MCF 10A (cell line): ENCODE measurements at regions of chr5 and their contacts with region 1.

Region 1: DNA sequence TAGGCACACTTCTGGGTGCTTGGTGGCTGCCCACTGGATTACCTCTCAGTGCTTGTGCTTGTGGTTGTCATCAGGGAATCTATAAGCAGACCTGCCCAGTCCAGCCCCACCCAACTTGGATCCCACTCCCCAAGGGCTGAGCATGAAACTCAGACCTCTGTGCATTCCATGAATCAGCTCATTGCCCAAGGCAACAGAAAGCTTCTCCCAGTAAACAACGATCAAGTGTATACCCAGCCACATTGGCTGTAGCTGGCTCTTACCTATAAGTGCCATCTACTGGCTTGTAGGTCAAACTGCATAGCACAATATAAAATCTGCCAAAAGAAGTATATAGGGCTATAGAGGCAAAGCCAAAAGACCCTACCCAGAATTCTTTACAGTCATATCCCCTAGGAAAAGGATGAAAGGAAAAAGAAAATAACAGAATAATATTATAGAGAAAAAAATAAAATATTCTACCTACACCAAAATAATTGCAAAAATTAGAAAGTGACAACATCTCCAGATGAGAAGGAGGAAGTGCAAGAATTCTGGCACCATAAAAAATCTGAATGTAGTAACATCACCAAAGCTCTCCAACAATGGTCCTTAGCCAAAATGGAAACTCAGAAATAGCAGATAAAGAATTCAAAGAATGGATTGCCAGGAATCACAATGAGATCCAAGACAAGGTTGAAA is 321.0 kb upstream of the TRPC7 start:
- DNase-seq: peak; percentile 55
- H3K4me3 Mint-ChIP-seq: no peak overlapping the region
- H3K27ac Mint-ChIP-seq: no peak overlapping the region
- H3K4me1 Mint-ChIP-seq: no peaks in the 10 kb centered on the region
- H3K27me3 Mint-ChIP-seq: no peaks in the 10 kb centered on the region
- CTCF ChIP-seq: peak; percentile 56

Region 2: DNA sequence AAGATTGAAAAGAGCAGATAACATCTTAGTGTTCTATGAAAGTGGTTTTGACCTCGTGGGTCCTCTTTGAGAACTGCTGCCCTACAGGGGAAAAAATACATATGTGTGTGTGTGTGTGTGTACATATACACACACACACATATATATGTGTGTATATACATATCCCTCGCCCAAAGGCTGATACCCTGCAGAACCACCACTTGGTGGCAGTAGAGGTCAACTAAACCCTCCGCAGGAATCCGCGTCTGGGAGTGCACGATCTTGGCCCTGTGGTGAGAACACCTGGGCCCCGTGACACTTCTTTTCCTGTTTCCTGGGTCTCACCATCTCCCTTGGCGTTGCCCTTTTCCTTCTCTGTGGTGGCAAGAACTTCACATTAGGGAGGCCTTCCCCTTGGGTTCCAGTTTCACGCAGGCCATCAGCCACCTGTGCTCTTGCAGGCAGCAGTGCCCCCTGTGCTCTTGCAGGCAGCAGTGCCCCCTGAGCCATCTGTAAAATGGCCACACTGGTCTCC is 798.9 kb before region 1 on chr5:
- CTCF ChIA-PET with region 1: no interaction called
- POLR2A ChIA-PET with region 1: no interaction called
- intact Hi-C with region 1: loop called (anchors 2 kb)
- DNase-seq: peak; percentile 90
- H3K4me3 Mint-ChIP-seq: no peak overlapping the region
- H3K27ac Mint-ChIP-seq: no peak overlapping the region
- H3K4me1 Mint-ChIP-seq: no peaks in the 10 kb centered on the region
- H3K27me3 Mint-ChIP-seq: peaks cover 37% of the 10 kb centered on the region
- CTCF ChIP-seq: peak; percentile 96

Region 3: GRCh38 chr5:136295914-136296313 is 390.4 kb before region 1 on chr5:
- CTCF ChIA-PET with region 1: interaction called, 11 read pairs
- POLR2A ChIA-PET with region 1: no interaction called
- intact Hi-C with region 1: no loop called
- DNase-seq: no peak
- H3K4me3 Mint-ChIP-seq: no peak overlapping the region
- H3K27ac Mint-ChIP-seq: no peak overlapping the region
- H3K4me1 Mint-ChIP-seq: no peaks in the 10 kb centered on the region
- H3K27me3 Mint-ChIP-seq: peaks cover 35% of the 10 kb centered on the region
- CTCF ChIP-seq: no peak

Region 4: DNA sequence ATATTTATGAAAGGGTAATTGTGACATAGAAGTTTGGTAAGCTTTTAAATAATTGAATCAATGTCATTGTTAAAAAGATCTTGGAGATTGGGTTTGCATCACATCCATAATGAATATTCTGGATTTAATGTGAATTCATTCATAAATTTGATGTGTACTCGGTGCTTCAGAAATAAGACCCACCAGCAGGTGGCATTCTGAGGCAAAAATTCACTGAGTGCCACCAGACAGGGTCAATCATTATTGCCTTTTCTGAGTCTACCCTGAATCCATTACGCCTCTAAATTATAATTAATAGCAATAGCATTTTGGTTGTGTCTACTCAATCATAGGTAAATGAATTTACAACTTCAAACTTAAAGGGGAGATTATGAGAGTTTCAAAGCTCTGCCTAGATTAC is 322.0 kb before region 1 on chr5:
- CTCF ChIA-PET with region 1: interaction called, 29 read pairs
- POLR2A ChIA-PET with region 1: no interaction called
- intact Hi-C with region 1: no loop called
- DNase-seq: peak; percentile 27
- H3K4me3 Mint-ChIP-seq: no peak overlapping the region
- H3K27ac Mint-ChIP-seq: no peak overlapping the region
- H3K4me1 Mint-ChIP-seq: no peaks in the 10 kb centered on the region
- H3K27me3 Mint-ChIP-seq: peaks cover 31% of the 10 kb centered on the region
- CTCF ChIP-seq: peak; percentile 51

Region 5: DNA sequence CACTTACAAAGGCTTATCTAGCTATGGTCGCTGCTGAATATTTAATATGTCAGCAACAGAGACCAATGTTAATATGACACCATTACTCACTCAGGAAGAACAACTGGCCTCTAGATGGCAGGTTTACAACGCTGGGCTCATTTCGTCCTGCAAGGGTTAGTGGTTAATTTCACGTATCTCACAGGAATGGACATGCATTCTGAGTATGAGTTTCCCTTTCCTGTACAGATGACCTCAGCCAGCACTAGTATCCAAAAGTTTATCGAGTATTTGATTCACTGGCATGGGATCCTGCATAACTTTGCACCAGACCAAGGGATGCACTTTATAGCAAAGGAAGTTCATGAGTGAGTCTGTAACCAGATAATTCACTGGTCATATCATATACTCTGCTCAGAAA is 312.3 kb before region 1 on chr5:
- CTCF ChIA-PET with region 1: interaction called, 5 read pairs
- POLR2A ChIA-PET with region 1: no interaction called
- intact Hi-C with region 1: loop called (anchors 1 kb)
- DNase-seq: peak; percentile 62
- H3K4me3 Mint-ChIP-seq: no peak overlapping the region
- H3K27ac Mint-ChIP-seq: no peak overlapping the region
- H3K4me1 Mint-ChIP-seq: no peaks in the 10 kb centered on the region
- H3K27me3 Mint-ChIP-seq: peaks cover 50% of the 10 kb centered on the region
- CTCF ChIP-seq: peak; percentile 23

Region 6: GRCh38 chr5:136674178-136674577 is 12.2 kb before region 1 on chr5:
- CTCF ChIA-PET with region 1: interaction called, 11 read pairs
- POLR2A ChIA-PET with region 1: no interaction called
- intact Hi-C with region 1: no loop called
- DNase-seq: no peak
- H3K4me3 Mint-ChIP-seq: no peak overlapping the region
- H3K27ac Mint-ChIP-seq: no peak overlapping the region
- H3K4me1 Mint-ChIP-seq: no peaks in the 10 kb centered on the region
- H3K27me3 Mint-ChIP-seq: peaks cover 13% of the 10 kb centered on the region
- CTCF ChIP-seq: no peak